Activated naive CD4-positive, alpha-beta T cell treated with anti-CD3 and anti-CD28 coated beads for 36 hours (primary cell): ENCODE measurements at regions of chr4 and their contacts with region 1.

Region 1: DNA sequence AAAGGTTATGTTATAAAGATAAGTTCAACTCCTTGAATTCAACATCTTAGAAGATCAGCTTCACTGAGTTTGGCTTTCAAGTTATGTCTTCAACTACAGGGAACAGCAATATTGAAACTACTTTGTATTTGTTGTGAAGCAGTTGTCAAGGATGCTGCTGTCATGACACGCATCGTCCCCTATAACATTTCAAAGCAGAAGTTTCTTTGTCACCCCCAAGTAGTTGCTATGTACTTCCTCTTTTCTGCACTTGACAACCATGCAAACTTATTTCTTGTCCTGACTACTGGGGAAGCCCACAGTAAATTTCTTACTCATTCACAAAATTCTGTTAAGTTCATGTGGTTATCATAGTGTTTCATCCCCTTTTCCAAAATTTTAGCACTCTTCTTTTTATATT is 14.3 kb downstream of the ANTXR2 start:
- DNase-seq: peak; percentile 67
- H3K4me3 Mint-ChIP-seq: peak overlapping the region; percentile 71
- H3K27ac Mint-ChIP-seq: peak overlapping the region; percentile 86
- H3K4me1 Mint-ChIP-seq: peaks cover 42% of the 10 kb centered on the region
- H3K27me3 Mint-ChIP-seq: no peaks in the 10 kb centered on the region

Region 2: DNA sequence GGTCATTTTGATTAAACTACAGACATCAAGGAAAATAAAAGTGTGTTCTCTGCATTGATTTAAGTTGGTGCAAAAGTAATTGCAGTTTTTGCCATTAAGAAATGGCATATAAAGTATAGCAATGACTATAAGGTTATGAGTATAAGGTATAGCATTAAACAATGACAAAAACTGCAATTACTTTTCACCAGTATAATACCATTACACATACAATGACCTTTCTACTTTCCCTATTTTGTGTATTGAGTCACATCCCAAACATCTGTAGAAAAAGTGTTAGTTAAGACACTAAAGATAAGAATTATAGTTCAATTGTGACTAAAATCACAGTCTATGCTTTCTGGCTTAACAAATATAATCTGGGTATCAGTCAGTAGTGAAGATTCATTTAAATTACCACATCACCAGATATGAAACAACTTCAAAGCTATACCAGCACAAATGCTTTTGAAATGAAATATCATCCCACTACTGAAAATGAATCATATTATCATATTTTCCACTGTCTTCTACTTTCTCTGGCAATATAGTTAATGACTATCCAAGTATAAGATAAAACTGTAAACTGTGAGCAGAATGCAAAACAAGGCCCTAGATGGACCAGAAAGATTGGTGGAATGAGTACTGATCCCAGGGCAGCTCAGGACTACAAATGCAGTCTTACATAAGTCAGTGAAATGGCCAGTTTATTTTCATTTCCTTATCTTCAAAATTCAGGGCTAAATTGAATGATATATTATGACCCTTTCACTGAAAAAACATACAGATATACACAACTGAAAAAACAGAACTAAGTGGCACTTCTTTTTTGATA is 226.8 kb before region 1 on chr4:
- CTCF ChIA-PET with region 1: no interaction called
- intact Hi-C with region 1: loop called (anchors 1 kb)
- DNase-seq: no peak
- H3K4me3 Mint-ChIP-seq: no peak overlapping the region
- H3K27ac Mint-ChIP-seq: no peak overlapping the region
- H3K4me1 Mint-ChIP-seq: peaks cover 12% of the 10 kb centered on the region
- H3K27me3 Mint-ChIP-seq: peaks cover 8% of the 10 kb centered on the region

Region 3: DNA sequence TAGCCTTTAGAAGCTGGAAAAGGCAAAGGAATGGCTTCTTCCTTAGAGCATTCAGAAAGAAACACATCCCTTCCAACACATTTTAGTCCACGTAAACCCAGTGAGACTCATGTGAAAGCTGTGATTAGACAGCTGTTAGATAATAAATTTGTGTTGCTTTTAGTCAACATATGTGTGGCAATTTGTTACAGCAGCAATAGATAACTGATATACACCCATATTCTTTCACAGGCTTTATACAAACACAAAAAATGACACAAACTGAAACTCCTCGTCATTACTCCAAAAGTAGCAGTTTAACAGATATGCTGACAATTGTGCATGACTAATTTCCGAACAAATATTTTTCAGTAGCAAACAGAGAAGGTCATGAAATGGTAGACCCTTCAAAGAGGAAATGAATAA is 51.0 kb before region 1 on chr4:
- CTCF ChIA-PET with region 1: no interaction called
- intact Hi-C with region 1: loop called (anchors 1 kb)
- DNase-seq: no peak
- H3K4me3 Mint-ChIP-seq: no peak overlapping the region
- H3K27ac Mint-ChIP-seq: no peak overlapping the region
- H3K4me1 Mint-ChIP-seq: peaks cover 38% of the 10 kb centered on the region
- H3K27me3 Mint-ChIP-seq: no peaks in the 10 kb centered on the region

Region 4: GRCh38 chr4:80138551-80139538 is 80.1 kb after region 1 on chr4:
- CTCF ChIA-PET with region 1: no interaction called
- intact Hi-C with region 1: loop called (anchors 1 kb)
- DNase-seq: peak; percentile 82
- H3K4me3 Mint-ChIP-seq: no peak overlapping the region
- H3K27ac Mint-ChIP-seq: no peak overlapping the region
- H3K4me1 Mint-ChIP-seq: peaks cover 57% of the 10 kb centered on the region
- H3K27me3 Mint-ChIP-seq: no peaks in the 10 kb centered on the region

Region 5: DNA sequence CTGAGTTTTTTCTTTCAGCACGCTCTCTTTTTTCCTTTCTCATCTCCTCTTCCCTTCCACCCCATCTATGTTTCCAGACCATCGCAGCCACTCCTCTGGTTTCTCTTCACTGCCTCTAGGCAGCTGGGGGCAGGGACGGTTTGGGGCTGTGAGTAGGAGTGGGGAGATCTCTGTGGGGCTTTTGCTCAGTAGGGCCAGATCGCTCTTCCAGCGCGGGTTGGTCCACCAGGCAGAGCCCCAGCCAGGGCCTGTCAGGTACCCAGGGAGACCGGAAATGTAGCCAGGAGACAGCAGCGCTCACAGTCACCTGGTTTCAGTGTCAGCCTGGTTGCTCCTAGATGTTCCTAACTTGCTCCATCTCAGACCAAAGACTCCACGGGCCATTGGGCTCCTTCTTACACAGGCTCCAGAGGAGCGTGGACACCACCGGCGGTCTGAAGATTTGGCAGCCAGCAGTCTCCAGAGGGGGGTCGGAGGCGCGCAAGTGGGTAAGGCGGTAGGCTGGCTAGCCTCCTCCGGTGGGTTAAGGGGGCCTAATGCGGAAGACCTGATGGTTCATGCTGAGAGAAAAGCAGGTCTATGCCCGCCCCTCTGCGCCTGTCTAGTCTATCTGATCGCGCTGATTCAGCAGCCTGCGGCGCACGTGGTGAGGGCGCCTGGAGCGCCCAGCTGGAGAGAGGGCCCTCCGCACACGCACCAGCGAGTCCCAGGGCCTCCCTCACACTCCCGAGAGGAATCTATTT is 209.5 kb after region 1 on chr4:
- CTCF ChIA-PET with region 1: no interaction called
- intact Hi-C with region 1: no loop called
- DNase-seq: peak; percentile 6
- H3K4me3 Mint-ChIP-seq: peak overlapping the region; percentile 32
- H3K27ac Mint-ChIP-seq: no peak overlapping the region
- H3K4me1 Mint-ChIP-seq: peaks cover 31% of the 10 kb centered on the region
- H3K27me3 Mint-ChIP-seq: peaks cover 59% of the 10 kb centered on the region

Region 6: GRCh38 chr4:80340036-80340435 is 281.3 kb after region 1 on chr4:
- CTCF ChIA-PET with region 1: no interaction called
- intact Hi-C with region 1: no loop called
- DNase-seq: no peak
- H3K4me3 Mint-ChIP-seq: no peak overlapping the region
- H3K27ac Mint-ChIP-seq: no peak overlapping the region
- H3K4me1 Mint-ChIP-seq: peaks cover 19% of the 10 kb centered on the region
- H3K27me3 Mint-ChIP-seq: peaks cover 9% of the 10 kb centered on the region

Region 7: DNA sequence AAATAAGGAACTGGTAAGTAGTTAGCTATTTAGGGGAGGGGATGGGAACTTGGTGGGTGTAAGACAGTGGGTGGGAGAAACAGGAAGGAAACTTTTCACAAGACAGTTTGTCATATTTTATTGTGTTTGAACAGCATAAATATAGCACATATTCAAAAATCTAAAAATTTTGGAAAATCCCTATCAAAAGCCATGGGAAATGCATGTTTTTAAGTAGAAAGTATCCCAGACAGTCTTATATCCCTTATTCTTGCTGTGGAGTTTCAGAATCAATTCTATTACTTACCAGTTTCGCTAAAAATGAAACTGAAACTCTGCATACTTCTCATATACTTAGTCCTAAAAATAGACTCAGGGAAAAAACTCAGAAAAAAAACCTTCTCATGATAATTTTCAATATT is 1435.3 kb after region 1 on chr4:
- CTCF ChIA-PET with region 1: no interaction called
- intact Hi-C with region 1: loop called (anchors 5 kb)
- DNase-seq: no peak
- H3K4me3 Mint-ChIP-seq: no peak overlapping the region
- H3K27ac Mint-ChIP-seq: peak overlapping the region; percentile 30
- H3K4me1 Mint-ChIP-seq: peaks cover 46% of the 10 kb centered on the region
- H3K27me3 Mint-ChIP-seq: no peaks in the 10 kb centered on the region